CD4-positive, alpha-beta memory T cell (primary cell): ENCODE measurements at regions of chr12 and their contacts with region 1.

Region 1: GRCh38 chr12:64796208-64796845 is 28.1 kb upstream of the TBC1D30 start:
- DNase-seq: peak; percentile 54 to 68 (median 60)
- H3K4me3 ChIP-seq: no peak overlapping the region
- H3K4me3 Mint-ChIP-seq: no peak overlapping the region
- H3K27ac ChIP-seq: no peak overlapping the region
- H3K27ac Mint-ChIP-seq: no peak overlapping the region
- H3K4me1 ChIP-seq: no peaks in the 10 kb centered on the region
- H3K4me1 Mint-ChIP-seq: no peaks in the 10 kb centered on the region
- H3K27me3 ChIP-seq: no peaks in the 10 kb centered on the region
- H3K27me3 Mint-ChIP-seq: peaks cover 20 to 21% of the 10 kb centered on the region in 2 donors

Region 2: GRCh38 chr12:64544371-64545080 is 251.8 kb before region 1 on chr12:
- CTCF ChIA-PET with region 1: interaction called, 15 read pairs
- POLR2A ChIA-PET with region 1: no interaction called
- intact Hi-C with region 1: loop called (anchors 1 kb)
- DNase-seq: no peak
- H3K4me3 ChIP-seq: no peak overlapping the region
- H3K4me3 Mint-ChIP-seq: no peak overlapping the region
- H3K27ac ChIP-seq: no peak overlapping the region
- H3K27ac Mint-ChIP-seq: no peak overlapping the region
- H3K4me1 ChIP-seq: peaks cover 2% of the 10 kb centered on the region
- H3K4me1 Mint-ChIP-seq: peaks cover 0 to 3% (median 2%) of the 10 kb centered on the region in 4 donors
- H3K27me3 ChIP-seq: no peaks in the 10 kb centered on the region
- H3K27me3 Mint-ChIP-seq: peaks cover 6 to 8% of the 10 kb centered on the region in 2 donors

Region 3: GRCh38 chr12:64551698-64552097 is 244.6 kb before region 1 on chr12:
- CTCF ChIA-PET with region 1: interaction called, 15 read pairs
- POLR2A ChIA-PET with region 1: no interaction called
- intact Hi-C with region 1: loop called (anchors 1 kb)
- DNase-seq: no peak
- H3K4me3 ChIP-seq: no peak overlapping the region
- H3K4me3 Mint-ChIP-seq: no peak overlapping the region
- H3K27ac ChIP-seq: no peak overlapping the region
- H3K27ac Mint-ChIP-seq: no peak overlapping the region
- H3K4me1 ChIP-seq: peaks cover 8% of the 10 kb centered on the region
- H3K4me1 Mint-ChIP-seq: peaks cover 5 to 9% (median 6%) of the 10 kb centered on the region in 4 donors
- H3K27me3 ChIP-seq: no peaks in the 10 kb centered on the region
- H3K27me3 Mint-ChIP-seq: no peaks in the 10 kb centered on the region

Region 4: DNA sequence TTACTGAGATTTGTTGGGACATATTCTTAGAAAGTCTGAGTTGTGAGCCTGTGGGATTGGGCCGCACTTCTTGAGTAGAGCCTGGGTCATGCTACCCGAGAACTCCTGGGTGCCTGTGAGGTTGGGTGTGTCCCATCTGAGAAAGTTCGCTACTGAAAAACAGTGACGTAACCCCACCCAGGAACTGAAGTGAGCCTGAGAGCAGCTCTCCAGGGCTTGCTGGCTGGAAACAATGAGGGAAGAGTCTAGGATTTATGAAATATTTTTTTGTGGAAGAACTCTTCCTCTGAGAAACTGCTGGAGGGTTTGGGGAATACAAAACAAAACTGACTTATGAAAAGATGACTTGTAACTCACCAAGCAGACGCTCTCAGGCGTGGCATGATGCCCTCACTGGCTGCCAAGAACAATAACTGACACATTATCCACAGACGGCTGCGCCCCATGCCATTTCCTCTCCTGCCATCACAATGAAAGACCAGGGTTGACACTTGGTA is 116.8 kb before region 1 on chr12:
- CTCF ChIA-PET with region 1: no interaction called
- POLR2A ChIA-PET with region 1: no interaction called
- intact Hi-C with region 1: no loop called
- DNase-seq: peak; percentile 73 to 86 (median 80)
- H3K4me3 ChIP-seq: peak overlapping the region in 1 of 2 donors; percentile 36
- H3K4me3 Mint-ChIP-seq: peak overlapping the region; percentile 76 to 85 (median 79)
- H3K27ac ChIP-seq: peak overlapping the region; percentile 75
- H3K27ac Mint-ChIP-seq: peak overlapping the region; percentile 94 to 98 (median 97)
- H3K4me1 ChIP-seq: peaks cover 99% of the 10 kb centered on the region
- H3K4me1 Mint-ChIP-seq: peaks cover 67 to 100% (median 86%) of the 10 kb centered on the region in 4 donors
- H3K27me3 ChIP-seq: no peaks in the 10 kb centered on the region
- H3K27me3 Mint-ChIP-seq: no peaks in the 10 kb centered on the region

Region 5: GRCh38 chr12:64716371-64716770 is 80.0 kb before region 1 on chr12:
- CTCF ChIA-PET with region 1: no interaction called
- POLR2A ChIA-PET with region 1: no interaction called
- intact Hi-C with region 1: no loop called
- DNase-seq: no peak
- H3K4me3 ChIP-seq: no peak overlapping the region
- H3K4me3 Mint-ChIP-seq: no peak overlapping the region
- H3K27ac ChIP-seq: no peak overlapping the region
- H3K27ac Mint-ChIP-seq: peak overlapping the region in 4 of 7 donors; percentile 50 to 75 (median 70)
- H3K4me1 ChIP-seq: peaks cover 7% of the 10 kb centered on the region
- H3K4me1 Mint-ChIP-seq: peaks cover 14 to 35% (median 26%) of the 10 kb centered on the region in 4 donors
- H3K27me3 ChIP-seq: no peaks in the 10 kb centered on the region
- H3K27me3 Mint-ChIP-seq: no peaks in the 10 kb centered on the region

Region 6: DNA sequence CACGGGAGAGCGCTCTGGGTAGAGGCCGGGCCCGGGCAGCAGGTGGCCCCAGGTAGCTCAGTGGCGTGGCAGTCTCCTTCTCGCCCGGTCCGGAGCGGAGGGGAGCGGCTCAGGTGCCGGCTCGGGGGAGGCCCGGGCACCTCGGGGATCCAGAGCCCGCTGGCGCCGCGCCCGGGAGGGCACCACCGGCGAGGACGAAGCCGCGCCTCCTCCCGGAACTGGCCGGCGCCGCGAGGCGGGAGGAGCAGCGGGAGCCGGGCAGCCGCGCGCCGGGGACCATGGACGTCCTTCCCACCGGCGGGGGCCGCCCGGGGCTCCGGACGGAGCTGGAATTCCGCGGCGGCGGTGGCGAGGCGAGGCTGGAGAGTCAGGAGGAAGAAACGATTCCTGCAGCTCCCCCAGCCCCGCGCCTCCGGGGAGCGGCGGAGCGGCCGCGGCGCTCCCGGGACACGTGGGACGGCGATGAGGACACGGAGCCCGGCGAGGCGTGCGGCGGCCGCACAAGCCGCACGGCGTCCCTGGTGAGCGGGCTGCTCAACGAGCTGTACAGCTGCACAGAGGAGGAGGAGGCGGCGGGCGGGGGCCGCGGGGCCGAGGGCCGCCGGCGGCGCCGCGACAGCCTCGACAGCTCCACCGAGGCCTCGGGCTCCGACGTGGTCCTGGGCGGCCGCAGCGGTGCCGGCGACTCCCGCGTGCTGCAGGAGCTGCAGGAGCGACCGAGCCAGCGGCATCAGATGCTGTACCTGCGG is 15.6 kb before region 1 on chr12:
- CTCF ChIA-PET with region 1: interaction called, 39 read pairs
- POLR2A ChIA-PET with region 1: interaction called, 3 read pairs
- intact Hi-C with region 1: no loop called
- DNase-seq: peak in 2 of 5 donors; percentile 7 to 19
- H3K4me3 ChIP-seq: peak overlapping the region in 1 of 2 donors; percentile 37
- H3K4me3 Mint-ChIP-seq: peak overlapping the region; percentile 70 to 96 (median 80)
- H3K27ac ChIP-seq: no peak overlapping the region
- H3K27ac Mint-ChIP-seq: no peak overlapping the region
- H3K4me1 ChIP-seq: peaks cover 19% of the 10 kb centered on the region
- H3K4me1 Mint-ChIP-seq: peaks cover 12 to 25% (median 19%) of the 10 kb centered on the region in 4 donors
- H3K27me3 ChIP-seq: peaks cover 27% of the 10 kb centered on the region
- H3K27me3 Mint-ChIP-seq: peaks cover 55 to 64% of the 10 kb centered on the region in 2 donors

Region 7: DNA sequence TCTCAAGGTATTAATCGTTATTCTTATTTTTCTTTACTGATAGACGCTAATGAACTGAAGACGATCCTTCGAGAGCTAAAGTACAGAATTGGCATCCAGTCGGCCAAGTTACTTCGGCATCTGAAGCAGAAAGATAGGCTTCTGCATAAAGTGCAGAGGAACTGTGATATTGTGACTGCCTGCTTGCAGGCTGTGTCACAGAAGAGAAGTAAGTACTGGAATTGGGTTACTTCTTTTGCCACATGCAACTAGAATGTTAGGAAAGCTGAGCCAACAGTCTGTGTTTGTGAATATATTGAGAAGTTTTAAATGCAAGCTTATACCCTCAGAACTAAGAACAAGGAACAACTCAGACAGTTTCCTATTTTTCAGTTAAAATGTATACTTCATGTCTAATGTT is 10.5 kb before region 1 on chr12:
- CTCF ChIA-PET with region 1: interaction called, 39 read pairs
- POLR2A ChIA-PET with region 1: interaction called, 3 read pairs
- intact Hi-C with region 1: no loop called
- DNase-seq: no peak
- H3K4me3 ChIP-seq: no peak overlapping the region
- H3K4me3 Mint-ChIP-seq: no peak overlapping the region
- H3K27ac ChIP-seq: no peak overlapping the region
- H3K27ac Mint-ChIP-seq: no peak overlapping the region
- H3K4me1 ChIP-seq: peaks cover 13% of the 10 kb centered on the region
- H3K4me1 Mint-ChIP-seq: peaks cover 10 to 19% (median 13%) of the 10 kb centered on the region in 4 donors
- H3K27me3 ChIP-seq: peaks cover 27% of the 10 kb centered on the region
- H3K27me3 Mint-ChIP-seq: peaks cover 29 to 33% of the 10 kb centered on the region in 2 donors

Region 8: GRCh38 chr12:64806593-64807460 is 10.5 kb after region 1 on chr12:
- CTCF ChIA-PET with region 1: interaction called, 28 read pairs
- POLR2A ChIA-PET with region 1: no interaction called
- intact Hi-C with region 1: no loop called
- DNase-seq: no peak
- H3K4me3 ChIP-seq: no peak overlapping the region
- H3K4me3 Mint-ChIP-seq: no peak overlapping the region
- H3K27ac ChIP-seq: no peak overlapping the region
- H3K27ac Mint-ChIP-seq: no peak overlapping the region
- H3K4me1 ChIP-seq: peaks cover 3% of the 10 kb centered on the region
- H3K4me1 Mint-ChIP-seq: peaks cover 0 to 5% (median 3%) of the 10 kb centered on the region in 4 donors
- H3K27me3 ChIP-seq: no peaks in the 10 kb centered on the region
- H3K27me3 Mint-ChIP-seq: peaks cover 28 to 34% of the 10 kb centered on the region in 2 donors

Region 9: GRCh38 chr12:65986047-65986446 is 1189.7 kb after region 1 on chr12:
- CTCF ChIA-PET with region 1: interaction called, 4 read pairs
- POLR2A ChIA-PET with region 1: no interaction called
- intact Hi-C with region 1: loop called (anchors 2 kb)
- DNase-seq: no peak
- H3K4me3 ChIP-seq: no peak overlapping the region
- H3K4me3 Mint-ChIP-seq: no peak overlapping the region
- H3K27ac ChIP-seq: no peak overlapping the region
- H3K27ac Mint-ChIP-seq: no peak overlapping the region
- H3K4me1 ChIP-seq: no peaks in the 10 kb centered on the region
- H3K4me1 Mint-ChIP-seq: no peaks in the 10 kb centered on the region
- H3K27me3 ChIP-seq: no peaks in the 10 kb centered on the region
- H3K27me3 Mint-ChIP-seq: peaks cover 4 to 6% of the 10 kb centered on the region in 2 donors